Activated naive CD8-positive, alpha-beta T cell treated with anti-CD3 and anti-CD28 coated beads, Interleukin-2, amount 10 ng/mL, durations not matched to agents 7 days and 5 days (primary cell): ENCODE measurements at regions of chr6 and their contacts with region 1.

Region 1: GRCh38 chr6:33904050-33904746 is 100.4 kb upstream of the MLN start:
- DNase-seq: peak; percentile 89
- ATAC-seq: peak; percentile 90
- H3K4me3 Mint-ChIP-seq: peak overlapping the region; percentile 88
- H3K27ac Mint-ChIP-seq: peak overlapping the region; percentile 96
- H3K4me1 Mint-ChIP-seq: peaks cover 68% of the 10 kb centered on the region
- H3K27me3 Mint-ChIP-seq: peaks cover 2% of the 10 kb centered on the region

Region 2: DNA sequence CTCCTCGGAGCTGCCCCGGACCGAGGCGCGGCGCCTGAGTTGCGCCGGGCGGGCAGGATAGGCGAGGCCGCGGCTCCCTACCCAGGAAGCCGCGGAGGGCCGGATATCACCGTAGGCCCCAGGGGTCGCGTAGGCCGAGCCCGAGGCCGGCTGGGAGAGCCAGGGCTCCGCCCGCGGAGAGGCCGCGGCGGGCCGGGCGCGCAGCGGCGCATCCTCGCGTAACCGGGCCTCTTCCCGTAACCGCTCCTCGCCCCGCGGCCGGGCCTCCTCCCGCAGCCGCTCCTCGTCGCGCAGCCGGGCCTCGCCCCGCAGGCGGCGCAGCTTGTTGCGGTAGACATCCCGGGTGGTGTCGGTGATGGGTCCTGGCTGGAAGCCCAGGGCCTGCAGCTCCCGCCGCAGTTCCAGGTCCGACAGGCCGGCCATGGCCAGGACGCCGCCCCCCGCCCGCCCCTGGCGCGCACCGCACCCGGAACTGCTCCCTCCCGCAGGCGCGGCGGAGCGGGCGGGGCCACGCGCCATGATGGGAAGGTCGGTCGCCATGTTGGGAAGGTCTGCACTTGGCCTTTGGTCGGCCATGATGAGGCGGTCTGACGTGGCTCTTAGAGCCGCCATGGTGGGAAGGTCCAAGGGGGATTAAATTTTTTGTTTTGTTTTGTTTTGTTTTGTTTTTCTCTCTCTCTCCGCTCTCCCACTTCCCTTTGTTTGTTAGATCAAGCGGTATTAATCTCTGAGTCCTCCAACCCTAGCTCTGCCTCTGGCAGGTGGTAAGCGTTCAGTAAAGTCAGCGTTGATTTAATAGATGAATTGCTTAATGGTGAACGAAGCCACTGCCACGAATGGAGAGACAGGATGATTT is 115.3 kb before region 1 on chr6 and contains the start of gene LEMD2:
- POLR2A ChIA-PET with region 1: interaction called, 27 read pairs
- DNase-seq: peak; percentile 96
- ATAC-seq: peak; percentile 82
- H3K4me3 Mint-ChIP-seq: peak within 1 kb of the TSS; percentile 94
- H3K27ac Mint-ChIP-seq: peak within 1 kb of the TSS; percentile 97
- H3K4me1 Mint-ChIP-seq: peaks cover 46% of the 10 kb centered on the region
- H3K27me3 Mint-ChIP-seq: peaks cover 7% of the 10 kb centered on the region
- total RNA-seq, gene LEMD2: 83.9 to 84.7 TPM

Region 3: DNA sequence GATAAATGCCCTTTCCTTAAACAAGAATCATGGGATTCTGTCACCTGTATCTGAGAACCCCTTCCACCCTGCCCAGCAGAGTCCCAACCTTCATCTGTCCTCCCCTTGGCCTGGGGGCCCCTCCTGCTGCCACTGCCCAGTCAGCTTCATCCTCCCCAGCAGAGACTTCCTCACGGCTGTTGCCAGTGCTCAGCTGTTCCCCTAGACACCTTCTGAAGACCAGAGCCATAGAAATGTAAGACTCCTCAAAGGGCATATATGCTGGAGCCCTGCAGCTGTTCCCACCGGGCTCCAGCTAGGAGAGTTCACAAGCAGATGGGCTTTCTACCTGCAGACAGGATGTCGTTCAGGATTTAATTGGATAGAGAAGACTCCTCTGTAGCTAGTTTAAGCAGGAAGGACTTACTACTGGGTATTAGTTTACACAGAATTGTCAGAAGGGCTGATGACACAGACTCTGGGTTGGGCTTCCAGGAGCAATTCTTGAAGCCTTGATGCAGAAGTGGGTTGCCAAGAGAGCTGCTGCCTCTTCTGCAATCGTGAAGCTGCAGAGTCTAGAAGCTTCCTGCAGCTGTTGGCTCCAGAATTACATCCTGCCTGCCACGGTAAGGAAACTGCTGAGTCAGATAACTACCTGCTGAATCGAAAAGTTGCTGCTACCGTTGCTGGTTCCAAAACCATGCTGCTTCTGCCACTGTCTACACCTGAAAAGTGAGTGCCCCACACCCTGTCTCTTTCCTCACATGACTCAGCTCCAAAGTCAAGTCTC is 43.3 kb before region 1 on chr6:
- POLR2A ChIA-PET with region 1: interaction called, 27 read pairs
- DNase-seq: no peak
- ATAC-seq: peak; percentile 59
- H3K4me3 Mint-ChIP-seq: peak overlapping the region; percentile 27
- H3K27ac Mint-ChIP-seq: peak overlapping the region; percentile 47
- H3K4me1 Mint-ChIP-seq: peaks cover 40% of the 10 kb centered on the region
- H3K27me3 Mint-ChIP-seq: peaks cover 31% of the 10 kb centered on the region

Region 4: DNA sequence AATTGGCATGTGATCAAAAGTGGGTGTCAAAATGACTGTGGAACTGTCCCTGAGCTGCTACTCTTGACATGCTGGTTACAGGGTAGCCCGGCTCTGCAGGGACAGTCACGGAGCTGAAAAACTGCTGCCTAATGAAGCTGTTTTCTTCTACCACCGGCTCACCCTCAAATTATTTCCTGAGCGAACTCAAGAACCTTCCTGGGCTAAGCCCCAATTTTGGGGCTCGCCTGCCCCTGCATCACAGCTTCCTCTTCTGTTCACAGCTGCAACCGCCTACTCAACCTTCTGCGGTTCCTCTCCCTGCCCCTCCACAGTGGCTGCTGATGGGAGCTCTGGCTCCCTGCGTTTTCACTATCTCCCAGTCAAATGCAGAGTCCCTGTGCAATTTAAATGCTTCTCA is 10.4 kb after region 1 on chr6:
- POLR2A ChIA-PET with region 1: interaction called, 59 read pairs
- DNase-seq: peak; percentile 56
- ATAC-seq: peak; percentile 93
- H3K4me3 Mint-ChIP-seq: peak overlapping the region; percentile 48
- H3K27ac Mint-ChIP-seq: peak overlapping the region; percentile 82
- H3K4me1 Mint-ChIP-seq: peaks cover 33% of the 10 kb centered on the region
- H3K27me3 Mint-ChIP-seq: no peaks in the 10 kb centered on the region